B cell (primary cell): ENCODE measurements at regions of chr12 and their contacts with region 1.

Region 1: DNA sequence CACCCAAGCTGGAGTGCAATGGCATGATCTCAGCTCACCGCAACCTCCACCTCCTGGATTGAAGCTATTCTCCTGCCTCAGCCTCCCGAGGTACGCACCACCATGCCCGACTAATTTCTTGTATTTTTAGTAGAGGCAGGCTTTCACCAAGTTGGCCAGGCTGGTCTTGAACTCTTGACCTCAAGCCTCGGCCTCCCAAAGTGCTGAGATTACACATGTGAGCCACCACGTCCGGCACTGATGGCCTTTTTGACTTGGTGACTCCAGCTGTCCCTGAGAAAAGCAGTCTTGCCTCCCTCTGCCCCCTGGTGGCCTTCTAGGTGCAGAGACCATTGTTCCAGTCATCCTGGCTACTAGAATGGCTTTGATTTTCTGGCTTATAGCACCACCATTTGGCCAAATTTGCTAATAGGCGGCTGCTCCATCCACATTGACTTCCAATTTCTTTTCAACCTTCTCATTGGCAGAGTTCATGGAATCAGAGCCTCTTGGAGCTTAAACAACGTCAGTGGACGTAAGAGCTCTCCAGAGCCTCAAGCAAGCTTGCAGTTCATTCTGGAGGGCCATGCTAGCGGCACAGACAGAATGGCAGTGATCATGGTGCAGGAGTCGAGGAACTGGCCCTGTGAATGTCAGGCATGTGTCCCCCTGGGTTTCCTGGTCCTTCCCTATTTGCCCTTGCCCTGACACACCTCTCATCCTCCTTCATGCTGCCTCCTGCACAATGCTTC is 25.4 kb upstream of the EIF4B start:
- DNase-seq: peak; percentile 87
- ATAC-seq: peak; percentile 95
- H3K4me3 ChIP-seq: no peak overlapping the region
- H3K4me3 Mint-ChIP-seq: no peak overlapping the region
- H3K27ac ChIP-seq: no peak overlapping the region
- H3K27ac Mint-ChIP-seq: no peak overlapping the region
- H3K4me1 ChIP-seq: no peaks in the 10 kb centered on the region
- H3K4me1 Mint-ChIP-seq: no peaks in the 10 kb centered on the region
- H3K27me3 ChIP-seq: peaks cover 0 to 8% (median 4%) of the 10 kb centered on the region in 4 experiments
- H3K27me3 Mint-ChIP-seq: peaks cover 38% of the 10 kb centered on the region
- CTCF ChIP-seq: peak; percentile 98

Region 2: DNA sequence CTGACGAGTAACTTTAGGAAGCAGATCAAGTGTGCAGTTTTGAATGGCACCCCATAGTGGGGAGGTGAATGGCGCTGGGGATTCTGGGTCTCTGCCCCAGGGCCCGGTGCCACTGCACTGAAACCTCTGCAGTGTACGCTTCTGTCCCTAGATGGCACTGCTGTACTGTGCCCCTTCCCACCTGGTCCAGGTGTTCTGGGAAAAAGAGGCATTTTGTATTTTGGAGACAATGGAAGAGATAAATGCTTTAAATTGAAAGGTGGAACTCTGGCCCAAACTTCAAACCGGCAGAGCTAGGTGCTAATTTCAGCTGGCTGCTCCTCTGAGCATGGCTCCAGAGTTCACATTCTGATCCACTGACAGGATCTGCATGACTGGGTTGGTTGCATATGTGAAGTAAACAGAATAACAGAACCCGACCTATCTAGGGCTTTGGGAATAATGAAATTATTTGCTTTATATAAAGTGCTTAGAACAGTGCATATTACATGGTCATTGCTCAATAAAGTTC is 841.3 kb before region 1 on chr12:
- CTCF ChIA-PET with region 1: no interaction called
- POLR2A ChIA-PET with region 1: no interaction called
- intact Hi-C with region 1: no loop called
- DNase-seq: peak; percentile 43
- ATAC-seq: peak; percentile 77
- H3K4me3 ChIP-seq: no peak overlapping the region
- H3K4me3 Mint-ChIP-seq: no peak overlapping the region
- H3K27ac ChIP-seq: no peak overlapping the region
- H3K27ac Mint-ChIP-seq: no peak overlapping the region
- H3K4me1 ChIP-seq: no peaks in the 10 kb centered on the region
- H3K4me1 Mint-ChIP-seq: peaks cover 1% of the 10 kb centered on the region
- H3K27me3 ChIP-seq: peaks cover 0 to 19% (median 0%) of the 10 kb centered on the region in 4 experiments
- H3K27me3 Mint-ChIP-seq: peaks cover 11% of the 10 kb centered on the region
- CTCF ChIP-seq: peak; percentile 64

Region 3: DNA sequence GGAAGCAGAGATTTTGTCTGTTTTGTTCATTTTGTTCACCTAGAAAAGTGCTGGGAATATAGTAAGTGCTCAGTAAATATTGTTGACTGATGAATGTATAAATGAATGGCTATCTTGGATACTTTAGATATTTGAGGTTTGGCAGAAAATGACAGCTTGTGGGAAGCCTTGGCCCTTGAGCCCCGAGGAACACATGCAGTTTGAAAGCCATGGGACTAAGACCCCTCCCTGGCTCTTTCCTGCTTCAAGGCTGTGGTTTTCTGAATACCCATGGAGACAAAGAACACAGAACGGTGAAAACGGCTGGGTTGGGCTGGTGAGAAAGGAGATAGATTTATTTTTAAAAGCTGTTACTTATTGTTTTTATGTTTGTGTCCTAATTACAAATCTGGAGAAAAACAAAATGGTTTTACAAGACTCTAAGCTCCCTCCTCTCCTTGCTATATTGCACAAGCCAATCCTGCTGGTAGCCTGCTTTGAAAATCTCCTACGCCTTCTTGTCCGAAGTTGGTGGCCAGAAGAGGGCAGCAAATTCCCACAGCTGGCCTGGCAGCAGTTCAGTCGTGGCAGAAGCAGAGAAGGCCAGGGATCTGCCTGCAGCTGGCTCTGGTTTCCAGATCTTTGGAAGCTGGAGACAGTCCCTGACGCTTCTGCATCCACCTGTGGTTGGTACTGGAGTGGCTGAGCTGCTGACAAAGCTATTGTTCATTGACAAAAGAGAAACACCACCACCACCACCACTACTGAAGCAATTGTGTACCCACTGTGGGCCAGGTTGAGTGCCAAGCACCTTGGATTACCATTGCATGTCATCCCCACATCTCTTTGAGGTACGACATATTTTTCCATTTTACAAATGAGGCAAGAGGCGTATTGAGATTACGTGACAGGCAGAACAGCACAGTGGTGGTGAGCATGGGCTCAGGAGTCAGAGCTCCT is 608.4 kb before region 1 on chr12:
- CTCF ChIA-PET with region 1: interaction called, 16 read pairs
- POLR2A ChIA-PET with region 1: no interaction called
- intact Hi-C with region 1: no loop called
- DNase-seq: peak; percentile 39
- ATAC-seq: no peak
- H3K4me3 ChIP-seq: no peak overlapping the region
- H3K4me3 Mint-ChIP-seq: no peak overlapping the region
- H3K27ac ChIP-seq: no peak overlapping the region
- H3K27ac Mint-ChIP-seq: no peak overlapping the region
- H3K4me1 ChIP-seq: no peaks in the 10 kb centered on the region
- H3K4me1 Mint-ChIP-seq: no peaks in the 10 kb centered on the region
- H3K27me3 ChIP-seq: peaks cover 0 to 11% (median 4%) of the 10 kb centered on the region in 4 experiments
- H3K27me3 Mint-ChIP-seq: peaks cover 33% of the 10 kb centered on the region
- CTCF ChIP-seq: peak; percentile 34

Region 4: DNA sequence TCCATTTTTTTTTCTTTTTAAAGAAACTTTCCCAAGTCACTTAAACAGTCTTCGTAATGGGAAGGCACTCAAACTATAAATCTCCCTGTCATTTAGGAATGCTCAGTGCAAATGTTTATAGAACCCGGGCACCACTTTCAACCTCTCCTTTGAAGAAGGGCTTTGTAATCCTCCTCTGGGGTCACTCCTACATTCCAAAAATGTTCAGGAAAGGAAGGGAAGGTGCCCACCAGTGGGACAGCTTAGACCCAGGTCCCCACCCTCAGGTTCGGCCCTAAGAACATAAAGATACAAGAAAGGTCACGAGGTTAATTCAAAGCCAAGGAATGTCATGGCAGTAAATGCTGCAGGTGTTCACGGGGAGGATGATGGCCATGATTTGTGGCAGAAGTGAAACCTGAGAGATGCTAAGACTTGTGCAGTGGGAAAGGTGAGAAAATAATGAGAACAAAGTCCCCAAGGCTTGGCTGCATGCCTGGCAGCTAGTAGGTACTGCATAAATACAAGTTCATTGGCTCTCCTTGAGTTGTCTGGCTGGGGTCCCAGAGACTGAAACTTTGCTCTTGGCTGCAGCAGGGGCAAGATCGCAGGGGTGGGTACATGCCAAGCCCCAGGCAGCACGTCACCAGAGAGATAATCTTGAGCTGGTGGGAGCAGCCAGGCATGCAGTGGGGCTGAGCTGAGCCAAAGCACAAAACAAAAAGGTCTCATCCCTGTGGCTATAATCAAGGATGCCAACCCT is 10.9 kb before region 1 on chr12:
- CTCF ChIA-PET with region 1: interaction called, 15 read pairs
- POLR2A ChIA-PET with region 1: no interaction called
- intact Hi-C with region 1: no loop called
- DNase-seq: no peak
- ATAC-seq: no peak
- H3K4me3 ChIP-seq: no peak overlapping the region
- H3K4me3 Mint-ChIP-seq: no peak overlapping the region
- H3K27ac ChIP-seq: no peak overlapping the region
- H3K27ac Mint-ChIP-seq: no peak overlapping the region
- H3K4me1 ChIP-seq: no peaks in the 10 kb centered on the region
- H3K4me1 Mint-ChIP-seq: no peaks in the 10 kb centered on the region
- H3K27me3 ChIP-seq: peaks cover 0 to 12% (median 1%) of the 10 kb centered on the region in 4 experiments
- H3K27me3 Mint-ChIP-seq: peaks cover 28% of the 10 kb centered on the region
- CTCF ChIP-seq: no peak

Region 5: DNA sequence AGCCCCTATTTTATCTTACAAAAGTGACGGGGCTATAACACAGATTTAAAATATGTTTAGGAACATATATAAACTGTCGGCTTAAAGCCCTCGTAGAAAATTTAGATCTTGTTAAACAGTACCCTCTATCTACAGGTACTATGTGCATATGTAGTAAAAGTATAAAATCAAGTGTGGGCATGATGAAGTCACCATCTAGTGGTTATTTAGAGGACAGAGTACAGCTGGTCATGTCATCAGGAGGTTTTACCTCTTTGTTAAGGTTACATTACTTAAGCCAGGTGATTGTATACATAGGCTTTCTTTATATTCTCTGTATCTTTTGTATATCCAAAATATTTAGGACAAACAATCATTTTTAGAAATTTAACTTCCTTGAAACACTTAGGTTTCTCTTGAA is 50.8 kb after region 1 on chr12:
- CTCF ChIA-PET with region 1: no interaction called
- POLR2A ChIA-PET with region 1: no interaction called
- intact Hi-C with region 1: no loop called
- DNase-seq: no peak
- ATAC-seq: no peak
- H3K4me3 ChIP-seq: no peak overlapping the region
- H3K4me3 Mint-ChIP-seq: no peak overlapping the region
- H3K27ac ChIP-seq: no peak overlapping the region
- H3K27ac Mint-ChIP-seq: no peak overlapping the region
- H3K4me1 ChIP-seq: no peaks in the 10 kb centered on the region
- H3K4me1 Mint-ChIP-seq: no peaks in the 10 kb centered on the region
- H3K27me3 ChIP-seq: no peaks in the 10 kb centered on the region
- H3K27me3 Mint-ChIP-seq: no peaks in the 10 kb centered on the region
- CTCF ChIP-seq: no peak